ENCODE measurements at regions of chr4 and their contacts with region 1.

Region 1: GRCh38 chr4:158253350-158253980 is 43.2 kb downstream of the TMEM144 start:
- DNase-seq: peak in 4 of 5 donors; percentile 33 to 52 (median 36)
- ATAC-seq: peak; percentile 34 to 81 (median 78)
- H3K4me3 ChIP-seq: no peak overlapping the region
- H3K27ac ChIP-seq: no peak overlapping the region
- H3K4me1 ChIP-seq: peaks cover 0 to 23% (median 0%) of the 10 kb centered on the region in 12 donors
- H3K27me3 ChIP-seq: no peaks in the 10 kb centered on the region
- CTCF ChIP-seq: peak; percentile 29 to 75 (median 63)
- POLR2A ChIP-seq: no peak

Region 2: DNA sequence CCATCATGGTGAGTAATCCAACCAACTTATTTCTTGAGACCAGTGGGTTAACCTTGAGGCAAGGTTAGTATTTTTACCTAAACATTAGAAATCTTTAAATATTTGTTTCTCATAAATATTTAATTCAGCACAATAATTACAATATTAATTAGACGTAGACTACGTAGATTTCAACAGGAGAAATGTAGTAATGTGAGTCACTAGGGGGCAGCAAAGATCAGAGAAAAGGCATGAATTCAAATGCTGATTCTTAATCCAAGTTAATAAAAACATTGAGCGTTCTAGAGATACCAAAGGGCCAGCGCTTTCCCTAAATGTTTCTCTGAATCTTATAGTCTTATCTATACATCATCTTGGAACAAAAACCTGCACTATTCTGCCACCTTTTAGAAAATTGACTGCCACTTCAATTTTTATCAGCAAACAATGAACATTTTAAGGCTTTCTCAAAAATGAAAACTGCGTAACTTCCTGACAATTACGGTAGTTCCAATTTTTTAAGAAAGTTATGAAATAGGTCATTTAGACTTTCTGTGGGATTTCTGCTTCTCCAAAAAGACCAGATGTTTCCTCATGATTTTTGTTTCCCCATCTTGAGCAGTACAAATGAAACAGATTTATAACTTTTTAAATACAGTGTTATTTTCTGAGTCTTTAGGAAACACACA is 261.3 kb before region 1 on chr4:
- intact Hi-C with region 1: loop called (anchors 1 to 10 kb)
- DNase-seq: peak in 2 of 5 donors; percentile 58 to 73
- ATAC-seq: peak; percentile 73 to 92 (median 81)
- H3K4me3 ChIP-seq: peak overlapping the region in 11 of 12 donors; percentile 20 to 58 (median 46)
- H3K27ac ChIP-seq: peak overlapping the region; percentile 43 to 89 (median 72)
- H3K4me1 ChIP-seq: peaks cover 0 to 31% (median 5%) of the 10 kb centered on the region in 12 donors
- H3K27me3 ChIP-seq: no peaks in the 10 kb centered on the region
- CTCF ChIP-seq: peak; percentile 59 to 87 (median 76)
- POLR2A ChIP-seq: no peak

Region 3: GRCh38 chr4:158193171-158193749 is 60.2 kb before region 1 on chr4:
- intact Hi-C with region 1: loop called in 9 of 10 experiments (anchors 2 to 10 kb)
- DNase-seq: no peak
- ATAC-seq: peak in 3 of 4 donors; percentile 61 to 81 (median 64)
- H3K4me3 ChIP-seq: no peak overlapping the region
- H3K27ac ChIP-seq: no peak overlapping the region
- H3K4me1 ChIP-seq: peaks cover 0 to 14% (median 5%) of the 10 kb centered on the region in 12 donors
- H3K27me3 ChIP-seq: no peaks in the 10 kb centered on the region
- CTCF ChIP-seq: peak; percentile 44 to 75 (median 58)
- POLR2A ChIP-seq: no peak

Region 4: GRCh38 chr4:158201322-158201721 is 52.1 kb before region 1 on chr4:
- intact Hi-C with region 1: loop called in 5 of 10 experiments (anchors 5 to 10 kb)
- DNase-seq: no peak
- ATAC-seq: peak in 1 of 4 donors; percentile 15
- H3K4me3 ChIP-seq: no peak overlapping the region
- H3K27ac ChIP-seq: no peak overlapping the region
- H3K4me1 ChIP-seq: peaks cover 0 to 14% (median 0%) of the 10 kb centered on the region in 12 donors
- H3K27me3 ChIP-seq: no peaks in the 10 kb centered on the region
- CTCF ChIP-seq: no peak
- POLR2A ChIP-seq: no peak

Region 5: DNA sequence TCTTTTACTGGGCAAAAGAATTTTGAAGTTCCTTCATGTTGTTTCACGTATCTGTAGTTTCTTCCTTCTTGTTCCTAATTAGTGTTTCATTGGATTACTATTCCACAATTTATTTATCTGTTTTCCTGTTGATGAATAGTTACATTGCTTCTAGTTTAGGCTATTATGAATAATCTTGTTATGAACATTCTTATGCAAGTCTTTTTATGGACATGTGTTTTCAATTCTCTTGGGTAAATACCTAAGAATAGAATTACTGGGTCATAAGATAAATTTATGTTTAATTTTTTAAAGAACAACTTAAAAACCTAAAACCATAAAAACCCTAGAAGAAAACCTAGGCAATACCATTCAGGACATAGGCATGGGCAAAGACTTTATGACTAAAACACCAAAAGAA is 197.3 kb after region 1 on chr4:
- intact Hi-C with region 1: no loop called
- DNase-seq: no peak
- ATAC-seq: no peak
- H3K4me3 ChIP-seq: no peak overlapping the region
- H3K27ac ChIP-seq: no peak overlapping the region
- H3K4me1 ChIP-seq: no peaks in the 10 kb centered on the region
- H3K27me3 ChIP-seq: no peaks in the 10 kb centered on the region
- CTCF ChIP-seq: no peak
- POLR2A ChIP-seq: no peak

Region 6: DNA sequence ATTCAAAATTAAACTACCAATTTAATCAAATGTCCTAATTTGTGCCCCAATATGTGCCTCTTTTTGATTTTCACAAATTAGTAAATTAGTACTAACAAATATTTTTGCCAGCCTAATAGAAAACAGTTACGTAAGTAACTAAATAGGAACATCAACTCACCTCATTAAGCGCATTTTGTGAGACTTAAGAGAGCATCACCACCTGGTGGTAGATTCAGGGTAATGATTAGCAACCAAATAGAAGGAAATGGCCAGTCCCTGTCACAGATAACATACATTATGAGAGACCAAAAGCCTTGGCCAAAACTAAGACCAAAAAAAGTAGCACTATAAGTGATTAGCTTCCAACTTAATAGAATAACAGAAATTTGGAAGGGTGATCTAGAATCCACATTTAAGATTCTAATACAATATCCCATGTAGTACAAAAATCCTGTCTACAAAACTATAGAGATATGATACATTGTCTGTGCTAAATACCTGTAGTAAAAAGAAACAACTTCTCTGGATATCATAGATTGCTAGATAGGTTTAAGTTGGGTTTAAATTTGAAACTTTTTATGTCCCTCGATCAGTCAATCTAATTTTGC is 371.5 kb after region 1 on chr4:
- intact Hi-C with region 1: loop called in 8 of 10 experiments (anchors 2 to 5 kb)
- DNase-seq: no peak
- ATAC-seq: peak; percentile 66 to 86 (median 80)
- H3K4me3 ChIP-seq: no peak overlapping the region
- H3K27ac ChIP-seq: peak overlapping the region in 6 of 12 donors; percentile 1 to 56 (median 32)
- H3K4me1 ChIP-seq: peaks cover 0 to 18% (median 0%) of the 10 kb centered on the region in 12 donors
- H3K27me3 ChIP-seq: no peaks in the 10 kb centered on the region
- CTCF ChIP-seq: peak; percentile 57 to 81 (median 66)
- POLR2A ChIP-seq: no peak